ENCODE measurements at regions of chr11 and their contacts with region 1.

Region 1: GRCh38 chr11:25357133-25357532 is 860.3 kb downstream of the LUZP2 start:
- DNase-seq: no peak
- H3K4me3 ChIP-seq: no peak overlapping the region
- H3K27ac ChIP-seq: no peak overlapping the region
- H3K4me1 ChIP-seq: no peaks in the 10 kb centered on the region
- H3K27me3 ChIP-seq: no peaks in the 10 kb centered on the region
- CTCF ChIP-seq: no peak

Region 2: GRCh38 chr11:25309818-25310217 is 47.3 kb before region 1 on chr11:
- intact Hi-C with region 1: loop called (anchors 5 kb)
- DNase-seq: no peak
- H3K4me3 ChIP-seq: no peak overlapping the region
- H3K27ac ChIP-seq: no peak overlapping the region
- H3K4me1 ChIP-seq: no peaks in the 10 kb centered on the region
- H3K27me3 ChIP-seq: no peaks in the 10 kb centered on the region
- CTCF ChIP-seq: no peak